H1 (cell line): ENCODE measurements at regions of chr5 and their contacts with region 1.

Region 1: GRCh38 chr5:36695677-36696673 is 89.6 kb downstream of the SLC1A3 start:
- DNase-seq: peak in 1 of 2 experiments; percentile 77
- H3K4me3 ChIP-seq: no peak overlapping the region
- H3K27ac ChIP-seq: no peak overlapping the region
- H3K4me1 ChIP-seq: peaks cover 0 to 3% (median 0%) of the 10 kb centered on the region in 4 experiments; a peak in 1 of 7 replicates
- H3K27me3 ChIP-seq: peaks cover 3 to 18% (median 13%) of the 10 kb centered on the region in 4 experiments; a peak in 6 of 7 replicates
- CTCF ChIP-seq: peak; percentile 62 to 94 (median 83)
- EP300 ChIP-seq: no peak
- POLR2A ChIP-seq: no peak
- RAD21 ChIP-seq: peak; percentile 87 to 93

Region 2: GRCh38 chr5:36397901-36398536 is 298.0 kb before region 1 on chr5:
- CTCF ChIA-PET with region 1: interaction called, 15 read pairs
- POLR2A ChIA-PET with region 1: no interaction called
- DNase-seq: no peak
- H3K4me3 ChIP-seq: no peak overlapping the region
- H3K27ac ChIP-seq: no peak overlapping the region
- H3K4me1 ChIP-seq: no peaks in the 10 kb centered on the region
- H3K27me3 ChIP-seq: no peaks in the 10 kb centered on the region
- CTCF ChIP-seq: peak in 2 of 3 experiments; percentile 36 to 47; a peak in 2 of 4 replicates
- EP300 ChIP-seq: no peak
- POLR2A ChIP-seq: no peak
- RAD21 ChIP-seq: peak; percentile 69 to 74

Region 3: GRCh38 chr5:36459176-36460135 is 236.5 kb before region 1 on chr5:
- CTCF ChIA-PET with region 1: interaction called, 13 read pairs
- POLR2A ChIA-PET with region 1: no interaction called
- DNase-seq: no peak
- H3K4me3 ChIP-seq: no peak overlapping the region
- H3K27ac ChIP-seq: no peak overlapping the region
- H3K4me1 ChIP-seq: no peaks in the 10 kb centered on the region
- H3K27me3 ChIP-seq: no peaks in the 10 kb centered on the region
- CTCF ChIP-seq: peak; percentile 34 to 79 (median 77)
- EP300 ChIP-seq: no peak
- POLR2A ChIP-seq: no peak
- RAD21 ChIP-seq: peak; percentile 60 to 66

Region 4: DNA sequence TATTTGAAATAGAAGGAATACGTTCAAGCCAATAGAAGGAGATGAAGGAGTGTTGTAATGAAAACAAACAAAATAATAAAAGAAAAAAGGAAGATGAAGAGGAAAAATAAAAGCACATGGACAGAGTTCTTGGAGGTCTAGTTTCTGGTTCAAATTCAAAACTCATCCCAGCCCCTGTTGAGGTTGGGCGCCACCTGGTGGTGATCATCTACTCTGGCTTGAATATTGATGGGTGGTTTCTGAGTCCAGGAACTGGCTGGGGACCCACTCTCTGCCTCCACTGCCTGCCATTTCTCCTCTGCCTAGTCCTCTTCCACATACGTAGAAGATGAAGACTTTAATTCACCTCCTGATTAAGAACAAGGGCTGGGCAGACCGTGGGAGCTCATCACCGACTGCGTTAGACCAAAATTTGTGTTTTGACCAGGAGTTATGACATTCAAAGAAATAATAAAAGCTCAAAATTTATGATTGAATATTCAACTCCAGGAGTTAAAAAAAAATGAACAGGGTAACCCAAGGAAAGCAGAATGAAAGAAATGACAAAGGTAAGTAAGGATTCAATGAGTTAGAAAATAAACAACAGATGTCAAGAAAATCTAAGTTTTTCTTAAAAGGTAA is 188.5 kb before region 1 on chr5:
- CTCF ChIA-PET with region 1: interaction called, 33 read pairs
- POLR2A ChIA-PET with region 1: no interaction called
- DNase-seq: peak in 1 of 2 experiments; percentile 91
- H3K4me3 ChIP-seq: no peak overlapping the region
- H3K27ac ChIP-seq: no peak overlapping the region
- H3K4me1 ChIP-seq: no peaks in the 10 kb centered on the region
- H3K27me3 ChIP-seq: no peaks in the 10 kb centered on the region
- CTCF ChIP-seq: peak; percentile 68 to 81 (median 81)
- EP300 ChIP-seq: no peak
- POLR2A ChIP-seq: no peak
- RAD21 ChIP-seq: peak; percentile 75 to 82

Region 5: GRCh38 chr5:36606428-36607113 is 89.4 kb before region 1 on chr5 and contains the start of gene SLC1A3:
- CTCF ChIA-PET with region 1: interaction called, 41 read pairs
- POLR2A ChIA-PET with region 1: no interaction called
- DNase-seq: peak in 1 of 2 experiments; percentile 71
- H3K4me3 ChIP-seq: peak within 1 kb of the TSS; percentile 69 to 74 (median 70)
- H3K27ac ChIP-seq: peak within 1 kb of the TSS; percentile 47; the same call in 1 of the 2 replicates
- H3K4me1 ChIP-seq: peaks cover 5 to 8% (median 6%) of the 10 kb centered on the region in 4 experiments; a peak in 6 of 7 replicates
- H3K27me3 ChIP-seq: no peaks in the 10 kb centered on the region
- CTCF ChIP-seq: no peak
- EP300 ChIP-seq: no peak
- POLR2A ChIP-seq: peak; percentile 84 to 92
- RAD21 ChIP-seq: no peak
- total RNA-seq, gene SLC1A3: 30.6 and 35.3 TPM in 2 replicates

Region 6: DNA sequence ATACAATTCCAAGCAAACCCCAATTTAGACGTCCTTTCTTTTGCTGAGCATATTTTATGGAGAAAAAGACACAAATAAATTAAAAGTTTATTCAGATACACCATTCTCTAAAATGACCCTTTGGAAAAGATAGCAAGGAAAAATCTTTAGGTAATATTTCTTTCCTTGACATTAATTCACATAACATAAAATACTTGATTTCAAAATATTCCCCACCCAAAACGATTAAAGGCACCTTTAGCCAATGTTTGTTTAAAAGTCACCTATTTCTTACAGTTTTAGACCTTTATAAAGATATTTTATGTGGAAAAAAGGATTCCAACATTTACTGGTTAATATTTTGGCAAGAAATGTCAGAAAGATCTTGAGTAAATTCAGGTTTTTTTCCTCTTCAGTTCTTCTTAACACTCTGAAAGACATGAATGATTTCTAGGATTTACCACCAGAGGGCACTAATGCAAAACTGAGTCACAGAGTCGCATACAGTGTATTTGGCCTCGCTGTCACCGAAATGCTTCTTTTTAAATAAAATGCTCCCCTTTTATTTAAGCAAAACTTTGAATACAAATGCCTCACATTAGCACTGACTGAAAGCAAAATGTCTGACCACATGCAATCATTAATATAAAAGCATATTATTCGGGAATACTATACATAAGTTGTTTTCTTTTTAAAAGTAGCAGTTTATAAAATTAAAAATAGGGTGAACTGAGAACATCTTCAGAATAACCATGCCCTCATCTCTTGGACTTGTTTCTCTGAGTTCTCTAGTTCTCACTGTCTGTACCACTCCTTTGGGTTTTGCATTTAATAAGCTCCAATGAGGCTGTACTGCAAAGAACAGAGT is 32.9 kb after region 1 on chr5:
- CTCF ChIA-PET with region 1: interaction called, 15 read pairs
- POLR2A ChIA-PET with region 1: no interaction called
- DNase-seq: no peak
- H3K4me3 ChIP-seq: no peak overlapping the region
- H3K27ac ChIP-seq: no peak overlapping the region
- H3K4me1 ChIP-seq: peaks cover 0 to 3% (median 0%) of the 10 kb centered on the region in 4 experiments; a peak in 3 of 7 replicates
- H3K27me3 ChIP-seq: no peaks in the 10 kb centered on the region
- CTCF ChIP-seq: peak in 2 of 3 experiments; percentile 51 to 63; a peak in 2 of 4 replicates
- EP300 ChIP-seq: no peak
- POLR2A ChIP-seq: no peak
- RAD21 ChIP-seq: peak; percentile 59 to 61

Region 7: GRCh38 chr5:36836831-36837230 is 140.9 kb after region 1 on chr5:
- CTCF ChIA-PET with region 1: no interaction called
- POLR2A ChIA-PET with region 1: no interaction called
- DNase-seq: no peak
- H3K4me3 ChIP-seq: no peak overlapping the region
- H3K27ac ChIP-seq: no peak overlapping the region
- H3K4me1 ChIP-seq: no peaks in the 10 kb centered on the region; a peak in 1 of 7 replicates
- H3K27me3 ChIP-seq: no peaks in the 10 kb centered on the region
- CTCF ChIP-seq: no peak
- EP300 ChIP-seq: no peak
- POLR2A ChIP-seq: no peak
- RAD21 ChIP-seq: no peak

Region 8: DNA sequence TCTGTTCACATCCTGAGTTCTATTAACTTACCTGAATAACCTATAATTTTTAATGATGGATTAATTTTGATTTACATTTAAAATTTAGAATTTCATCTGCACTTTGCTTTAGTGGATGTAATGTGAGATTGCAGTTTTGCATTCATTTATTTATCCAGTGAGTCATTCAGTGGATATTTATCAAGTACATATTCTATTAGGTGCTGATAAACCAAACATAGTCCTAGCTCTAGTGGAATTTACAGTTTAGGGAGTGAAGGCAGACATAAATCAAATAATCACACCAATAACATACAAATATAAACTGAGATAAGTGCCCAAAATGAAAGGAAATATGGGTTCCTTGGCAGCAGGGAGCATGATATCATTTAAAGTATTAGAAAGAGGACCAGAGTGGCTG is 165.8 kb after region 1 on chr5:
- CTCF ChIA-PET with region 1: no interaction called
- POLR2A ChIA-PET with region 1: no interaction called
- DNase-seq: no peak
- H3K4me3 ChIP-seq: no peak overlapping the region
- H3K27ac ChIP-seq: no peak overlapping the region
- H3K4me1 ChIP-seq: 0 out of 7 replicates have a peak, but pooled peaks cover 0 to 6% (median 0%) of the 10 kb centered on the region in 4 experiments
- H3K27me3 ChIP-seq: no peaks in the 10 kb centered on the region
- CTCF ChIP-seq: no peak
- EP300 ChIP-seq: no peak
- POLR2A ChIP-seq: no peak
- RAD21 ChIP-seq: no peak